AG04450 (cell line): ENCODE measurements at regions of chr5 and their contacts with region 1.

Region 1: GRCh38 chr5:147453875-147454814 is 55.7 kb downstream of the DPYSL3 start:
- DNase-seq: peak; percentile 71
- H3K4me3 ChIP-seq: peak overlapping the region; percentile 84
- H3K27ac ChIP-seq: peak overlapping the region; percentile 86
- H3K27me3 ChIP-seq: no peaks in the 10 kb centered on the region
- CTCF ChIP-seq: peak; percentile 95

Region 2: GRCh38 chr5:147417135-147417813 is 36.9 kb before region 1 on chr5:
- CTCF ChIA-PET with region 1: interaction called, 14 read pairs
- POLR2A ChIA-PET with region 1: no interaction called
- DNase-seq: no peak
- H3K4me3 ChIP-seq: no peak overlapping the region
- H3K27ac ChIP-seq: peak overlapping the region; percentile 71
- H3K27me3 ChIP-seq: no peaks in the 10 kb centered on the region
- CTCF ChIP-seq: no peak

Region 3: GRCh38 chr5:147442224-147442623 is 11.9 kb before region 1 on chr5:
- CTCF ChIA-PET with region 1: interaction called, 11 read pairs
- POLR2A ChIA-PET with region 1: no interaction called
- DNase-seq: no peak
- H3K4me3 ChIP-seq: no peak overlapping the region
- H3K27ac ChIP-seq: no peak overlapping the region
- H3K27me3 ChIP-seq: no peaks in the 10 kb centered on the region
- CTCF ChIP-seq: no peak

Region 4: DNA sequence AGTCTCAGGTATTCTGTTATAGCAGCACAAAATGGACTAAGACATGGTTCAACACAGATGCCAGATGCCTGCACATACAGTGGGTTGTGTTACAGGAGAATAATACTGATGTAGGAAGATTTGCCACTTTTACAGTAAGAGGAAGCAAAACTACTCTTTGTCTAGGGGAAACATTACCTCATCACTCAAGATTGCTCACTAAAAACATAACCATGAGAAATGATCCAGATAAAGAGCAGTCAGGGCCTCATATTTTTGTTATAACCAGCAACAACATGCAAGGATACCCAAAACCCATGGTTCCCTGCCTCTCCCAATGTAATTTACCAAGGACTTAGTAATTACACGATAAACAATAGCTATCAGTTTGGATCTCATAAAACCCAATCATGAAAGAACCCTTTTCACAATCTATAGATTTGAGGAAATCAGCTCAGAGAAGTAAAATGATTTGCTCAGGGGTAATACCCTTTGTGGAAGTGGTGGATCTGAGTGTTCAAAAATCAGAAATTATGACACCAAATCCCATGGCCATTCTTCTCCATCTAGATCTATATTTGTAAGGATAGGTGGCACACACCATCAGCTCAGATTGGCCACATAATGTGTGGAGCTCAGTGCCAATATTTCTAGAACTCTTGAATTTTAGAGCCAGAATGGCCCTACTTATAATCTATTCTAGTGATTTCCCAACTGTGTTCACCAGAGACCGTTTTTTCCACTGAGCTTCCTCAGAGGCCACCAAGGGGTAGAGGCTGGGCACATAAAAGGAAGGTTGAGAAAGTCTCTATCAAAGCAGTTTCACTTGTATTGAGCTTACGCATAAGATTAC is 27.9 kb after region 1 on chr5:
- CTCF ChIA-PET with region 1: interaction called, 16 read pairs
- POLR2A ChIA-PET with region 1: interaction called, 8 read pairs
- DNase-seq: no peak
- H3K4me3 ChIP-seq: no peak overlapping the region
- H3K27ac ChIP-seq: peak overlapping the region; percentile 73
- H3K27me3 ChIP-seq: no peaks in the 10 kb centered on the region
- CTCF ChIP-seq: no peak

Region 5: DNA sequence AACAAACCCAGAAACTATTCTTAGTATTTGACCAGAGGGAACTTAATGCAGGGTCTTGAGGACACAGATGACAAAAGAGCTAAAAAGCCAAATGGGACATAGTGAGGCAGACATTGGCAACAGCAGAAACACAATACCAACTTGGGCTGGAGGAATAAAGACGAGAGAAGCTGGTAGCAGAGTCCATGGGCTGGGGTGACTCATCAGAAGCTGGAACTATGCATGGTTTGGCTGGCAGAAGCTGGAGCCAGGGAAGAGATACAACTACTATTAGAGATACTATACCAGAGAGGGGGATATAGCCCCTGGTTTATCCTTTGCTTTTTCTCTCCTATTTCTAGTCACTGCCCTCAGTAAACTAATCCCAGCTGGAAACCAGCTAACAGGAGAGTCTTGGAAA is 84.9 kb after region 1 on chr5:
- CTCF ChIA-PET with region 1: interaction called, 19 read pairs
- POLR2A ChIA-PET with region 1: interaction called, 7 read pairs
- DNase-seq: no peak
- H3K4me3 ChIP-seq: no peak overlapping the region
- H3K27ac ChIP-seq: no peak overlapping the region
- H3K27me3 ChIP-seq: no peaks in the 10 kb centered on the region
- CTCF ChIP-seq: no peak